GM13976 (cell line): ENCODE measurements at regions of chr15 and their contacts with region 1.

Region 1: GRCh38 chr15:34927726-34928125 is 41.8 kb downstream of the AQR start:
- DNase-seq: no peak
- CTCF ChIP-seq: no peak

Region 2: DNA sequence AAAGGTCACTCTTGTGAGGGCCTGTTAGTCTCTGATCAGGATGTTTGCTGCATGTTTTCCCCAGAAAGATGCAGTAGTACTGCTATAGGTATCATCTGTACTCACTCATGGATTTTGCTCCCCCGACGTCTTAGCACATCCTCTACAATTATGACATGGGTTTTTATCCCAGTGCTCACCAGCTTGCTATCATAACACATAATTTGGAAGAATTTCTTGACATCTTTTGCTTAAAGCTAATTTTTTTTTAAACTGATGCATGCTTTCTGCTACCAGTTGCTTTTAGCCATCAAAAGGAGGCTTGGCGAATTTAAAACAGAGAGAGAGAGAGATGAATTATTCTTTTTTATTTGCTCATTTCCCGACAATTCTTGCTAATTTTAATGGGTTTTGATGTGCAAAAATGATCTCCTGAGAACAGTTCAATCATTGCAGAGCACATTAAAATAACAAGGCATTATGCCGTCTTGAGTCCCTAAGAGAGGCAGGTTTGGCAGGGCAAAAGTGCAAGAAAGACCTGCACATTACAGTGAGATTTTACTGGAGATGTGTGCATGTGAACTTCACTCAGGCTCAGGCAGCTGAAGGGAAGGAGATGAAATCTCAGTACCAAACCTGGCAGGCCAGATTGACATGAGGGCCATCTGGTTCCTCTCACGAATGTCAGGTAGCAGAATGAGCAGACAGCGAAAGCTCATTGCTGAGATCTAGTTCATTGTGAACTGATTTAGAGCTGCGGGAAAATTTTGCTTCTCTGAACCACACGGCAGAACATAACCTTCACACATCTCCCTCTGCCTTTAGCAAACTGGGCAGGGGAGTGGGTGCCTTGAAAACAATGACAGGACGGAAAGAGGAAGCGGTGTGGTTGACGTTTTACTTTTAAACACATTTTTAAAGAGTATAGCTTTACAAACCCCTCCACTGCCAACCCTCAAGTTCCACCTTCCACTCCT is 318.3 kb before region 1 on chr15:
- in situ Hi-C with region 1: loop called (anchors 10 kb)
- DNase-seq: peak; percentile 7
- CTCF ChIP-seq: no peak

Region 3: GRCh38 chr15:34708422-34708821 is 219.3 kb before region 1 on chr15:
- in situ Hi-C with region 1: loop called (anchors 10 kb)
- DNase-seq: peak; percentile 33
- CTCF ChIP-seq: peak; percentile 63

Region 4: GRCh38 chr15:35117543-35118265 is 190.0 kb after region 1 on chr15:
- in situ Hi-C with region 1: no loop called
- DNase-seq: no peak
- CTCF ChIP-seq: no peak